AG04449 (cell line): ENCODE measurements at regions of chr20 and their contacts with region 1.

Region 1: GRCh38 chr20:21505161-21505809 is 8.6 kb downstream of the NKX2-2 start:
- DNase-seq: no peak
- H3K4me3 ChIP-seq: peak overlapping the region; percentile 51
- CTCF ChIP-seq: peak; percentile 94

Region 2: GRCh38 chr20:20837574-20838021 is 667.7 kb before region 1 on chr20:
- CTCF ChIA-PET with region 1: interaction called, 99 read pairs
- POLR2A ChIA-PET with region 1: no interaction called
- DNase-seq: no peak
- H3K4me3 ChIP-seq: no peak overlapping the region
- CTCF ChIP-seq: peak; percentile 60

Region 3: GRCh38 chr20:20860078-20860806 is 645.0 kb before region 1 on chr20:
- CTCF ChIA-PET with region 1: interaction called, 70 read pairs
- POLR2A ChIA-PET with region 1: no interaction called
- DNase-seq: peak; percentile 40
- H3K4me3 ChIP-seq: no peak overlapping the region
- CTCF ChIP-seq: peak; percentile 77

Region 4: DNA sequence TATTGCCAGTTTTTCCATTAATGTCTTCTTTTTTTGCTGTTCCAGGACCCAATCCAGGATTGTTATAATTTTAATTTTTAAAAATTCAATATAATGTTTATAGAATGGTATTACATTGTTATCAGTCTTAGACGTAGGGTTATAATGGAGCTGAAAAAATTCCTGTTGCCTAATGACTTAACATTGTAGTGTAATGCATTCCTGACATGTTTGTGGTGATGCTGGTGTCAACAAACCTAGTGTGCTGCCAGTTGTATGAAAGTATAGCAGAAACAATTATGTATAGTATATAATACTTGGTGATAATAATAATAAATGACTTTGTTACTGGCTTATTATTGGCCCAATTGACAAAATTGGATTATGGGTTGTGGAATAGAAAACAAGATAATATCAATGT is 349.0 kb before region 1 on chr20:
- CTCF ChIA-PET with region 1: no interaction called
- POLR2A ChIA-PET with region 1: no interaction called
- DNase-seq: peak; percentile 44
- H3K4me3 ChIP-seq: no peak overlapping the region
- CTCF ChIP-seq: no peak

Region 5: DNA sequence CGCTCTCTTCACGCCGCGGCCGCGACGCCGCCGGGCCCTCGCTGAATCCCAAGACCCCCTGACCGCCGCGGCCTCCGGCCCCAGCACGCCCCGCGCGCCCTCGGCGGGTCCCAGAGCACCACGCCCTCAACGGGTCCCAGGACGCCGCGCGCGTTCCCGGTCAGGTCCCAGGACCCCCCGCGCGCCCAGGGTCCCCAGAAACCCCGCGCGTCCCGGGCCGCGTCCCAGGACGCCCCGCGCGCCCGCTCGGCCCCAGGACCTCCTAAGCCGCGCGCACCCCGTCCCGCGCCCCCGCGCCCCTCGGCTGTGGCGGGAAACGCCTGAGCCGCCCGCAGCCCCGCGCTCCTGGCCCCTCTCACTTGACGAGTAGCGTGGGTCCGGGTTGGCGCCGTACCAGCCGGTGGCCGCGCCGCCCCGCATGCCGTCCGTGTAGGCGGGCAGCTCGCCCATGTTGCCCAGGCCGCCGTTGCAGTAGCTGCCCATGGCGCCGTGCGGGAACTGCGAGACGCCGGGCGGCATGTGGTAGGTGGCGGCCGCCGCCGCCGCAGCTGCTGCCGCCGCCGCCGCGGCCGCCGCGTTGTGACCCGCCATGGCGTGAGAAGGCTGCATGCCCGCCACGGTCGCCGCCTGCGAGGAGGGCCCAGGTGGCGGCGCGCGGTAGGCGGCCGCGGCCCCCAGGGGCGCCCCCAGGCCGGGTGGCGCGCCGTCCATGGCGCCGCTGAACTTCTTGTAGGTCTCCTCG is 108.5 kb before region 1 on chr20:
- CTCF ChIA-PET with region 1: no interaction called
- POLR2A ChIA-PET with region 1: no interaction called
- DNase-seq: no peak
- H3K4me3 ChIP-seq: no peak overlapping the region
- CTCF ChIP-seq: no peak

Region 6: DNA sequence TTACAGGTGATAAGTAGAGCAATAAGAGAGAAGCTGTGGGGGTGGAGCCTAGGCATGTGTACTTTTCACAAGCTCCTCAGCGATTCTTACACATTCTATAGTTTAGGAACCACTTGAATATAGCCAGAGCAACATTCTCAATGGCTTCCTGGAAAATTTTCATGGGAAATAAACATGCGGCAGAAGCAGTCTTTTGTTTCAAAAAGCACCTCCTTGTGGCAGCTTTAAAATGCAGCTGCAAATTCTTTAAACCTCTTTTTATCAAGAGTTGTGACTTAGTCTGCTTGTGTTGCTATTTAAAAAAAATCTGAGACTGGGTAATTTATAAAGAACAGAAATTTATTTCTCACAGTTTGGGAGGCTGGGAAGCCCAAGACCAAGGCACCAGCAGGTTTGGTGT is 15.2 kb before region 1 on chr20:
- CTCF ChIA-PET with region 1: interaction called, 29 read pairs
- POLR2A ChIA-PET with region 1: no interaction called
- DNase-seq: no peak
- H3K4me3 ChIP-seq: no peak overlapping the region
- CTCF ChIP-seq: no peak